SK-N-SH (cell line): ENCODE measurements at regions of chr3 and their contacts with region 1.

Region 1: DNA sequence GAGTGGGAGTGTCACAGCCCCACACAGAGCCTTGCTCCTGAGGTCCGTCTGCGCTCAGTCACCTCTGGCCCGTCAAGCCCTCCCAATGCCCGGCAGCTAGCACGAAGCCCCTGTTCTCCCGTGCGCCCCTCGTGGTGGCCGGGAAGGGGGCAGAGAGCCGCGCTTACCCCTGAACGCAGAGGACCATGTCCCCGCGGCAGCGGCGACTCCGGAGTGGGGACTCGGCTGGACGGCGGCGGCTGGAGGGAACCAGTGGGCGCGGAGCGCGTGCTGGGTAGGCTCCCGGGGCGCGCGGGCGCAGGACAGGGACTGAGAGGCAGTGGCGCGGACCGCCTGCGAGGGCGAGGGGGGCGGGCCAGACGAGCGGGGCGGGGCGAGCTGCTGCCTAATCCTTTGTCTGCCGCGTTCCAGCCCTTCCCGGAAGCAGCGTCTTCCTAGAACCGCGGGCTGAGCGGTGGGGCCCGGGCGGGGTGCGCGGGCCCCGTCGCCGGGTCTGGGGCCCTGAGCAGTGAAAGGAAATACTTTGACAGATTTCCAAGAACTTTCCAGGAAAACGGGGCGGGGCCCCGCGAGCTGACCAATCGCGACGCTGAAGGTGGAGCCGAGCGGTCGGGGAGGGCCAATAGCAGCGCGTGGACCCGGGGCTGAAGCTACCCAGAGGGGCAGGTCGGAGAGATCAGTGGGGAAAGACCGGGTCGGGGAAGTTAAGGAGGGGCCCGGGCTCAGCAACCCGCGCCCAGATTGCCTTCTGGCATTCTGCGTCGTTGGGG is at the start of gene CISH:
- DNase-seq: peak; percentile 96
- H3K4me3 ChIP-seq: peak within 1 kb of the TSS; percentile 56 to 71
- H3K27ac ChIP-seq: peak within 1 kb of the TSS; percentile 14 to 73; a peak in 3 of 4 replicates
- H3K4me1 ChIP-seq: peaks cover 0 to 44% of the 10 kb centered on the region in 2 experiments; a peak in 1 of 4 replicates
- H3K27me3 ChIP-seq: no peaks in the 10 kb centered on the region
- CTCF ChIP-seq: peak; percentile 58
- EP300 ChIP-seq: no peak
- RAD21 ChIP-seq: no peak
- polyA plus RNA-seq, gene CISH: 2.0 and 2.6 TPM in 2 replicates

Region 2: DNA sequence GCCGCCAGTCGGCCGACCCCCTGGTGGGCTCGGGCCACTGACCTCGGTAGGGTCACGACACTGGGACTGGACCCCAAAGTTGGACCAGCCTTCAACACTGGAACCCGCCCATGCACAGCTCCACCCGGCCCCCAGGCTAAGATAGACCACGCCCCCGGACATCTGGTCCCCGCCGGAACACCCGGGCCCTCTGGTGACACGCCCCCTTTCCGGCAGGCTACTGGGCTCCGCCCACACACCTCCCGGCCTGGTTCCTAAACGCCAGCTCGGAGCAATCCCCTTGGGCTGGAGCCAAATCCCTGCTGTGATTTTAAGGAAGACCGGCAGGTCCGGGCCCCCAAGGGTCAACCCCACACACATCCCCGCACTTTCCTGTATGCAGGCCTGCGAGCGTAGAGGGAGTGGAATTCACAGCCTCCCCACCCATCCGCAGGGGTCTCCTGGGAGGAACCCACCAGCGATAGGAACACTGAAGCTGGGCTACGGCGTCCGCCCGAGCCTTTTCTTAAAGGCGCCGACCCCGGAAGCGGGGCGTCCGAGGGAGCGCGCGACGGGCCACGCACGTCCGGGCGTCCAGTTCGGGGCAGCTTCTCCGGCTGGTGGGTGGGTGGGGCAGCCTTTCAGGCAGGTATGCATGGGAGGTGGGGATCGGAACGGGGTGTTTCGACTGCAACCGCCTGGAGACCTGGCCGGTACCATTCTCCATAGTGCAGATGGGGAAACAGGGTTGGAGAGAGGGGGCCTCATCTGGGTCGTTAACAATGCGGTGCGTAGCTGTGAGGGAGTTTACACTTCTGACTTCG is 42.5 kb before region 1 on chr3 and contains the start of gene HEMK1:
- CTCF ChIA-PET with region 1: interaction called, 648 read pairs
- POLR2A ChIA-PET with region 1: interaction called, 8 read pairs
- DNase-seq: peak; percentile 99
- H3K4me3 ChIP-seq: peak within 1 kb of the TSS; percentile 71 to 81
- H3K27ac ChIP-seq: peak within 1 kb of the TSS; percentile 86 to 96
- H3K4me1 ChIP-seq: peaks cover 0 to 22% of the 10 kb centered on the region in 2 experiments; a peak in 1 of 4 replicates
- H3K27me3 ChIP-seq: no peaks in the 10 kb centered on the region
- CTCF ChIP-seq: no peak
- EP300 ChIP-seq: peak in 1 of 2 experiments; percentile 48; a peak in 1 of 4 replicates
- RAD21 ChIP-seq: no peak
- polyA plus RNA-seq, gene HEMK1: 15.4 and 21.7 TPM in 2 replicates

Region 3: GRCh38 chr3:50627407-50628051 is 15.9 kb after region 1 on chr3:
- CTCF ChIA-PET with region 1: interaction called, 162 read pairs
- POLR2A ChIA-PET with region 1: interaction called, 3 read pairs
- DNase-seq: peak; percentile 49
- H3K4me3 ChIP-seq: no peak overlapping the region
- H3K27ac ChIP-seq: 0 out of 4 replicates have a peak overlapping the region, but pooled peaks of 1 of the 2 experiments have one; percentile 28
- H3K4me1 ChIP-seq: peaks cover 11 to 34% of the 10 kb centered on the region in 2 experiments; a peak in 3 of 4 replicates
- H3K27me3 ChIP-seq: no peaks in the 10 kb centered on the region
- CTCF ChIP-seq: peak; percentile 56
- EP300 ChIP-seq: no peak
- RAD21 ChIP-seq: peak; percentile 74

Region 4: DNA sequence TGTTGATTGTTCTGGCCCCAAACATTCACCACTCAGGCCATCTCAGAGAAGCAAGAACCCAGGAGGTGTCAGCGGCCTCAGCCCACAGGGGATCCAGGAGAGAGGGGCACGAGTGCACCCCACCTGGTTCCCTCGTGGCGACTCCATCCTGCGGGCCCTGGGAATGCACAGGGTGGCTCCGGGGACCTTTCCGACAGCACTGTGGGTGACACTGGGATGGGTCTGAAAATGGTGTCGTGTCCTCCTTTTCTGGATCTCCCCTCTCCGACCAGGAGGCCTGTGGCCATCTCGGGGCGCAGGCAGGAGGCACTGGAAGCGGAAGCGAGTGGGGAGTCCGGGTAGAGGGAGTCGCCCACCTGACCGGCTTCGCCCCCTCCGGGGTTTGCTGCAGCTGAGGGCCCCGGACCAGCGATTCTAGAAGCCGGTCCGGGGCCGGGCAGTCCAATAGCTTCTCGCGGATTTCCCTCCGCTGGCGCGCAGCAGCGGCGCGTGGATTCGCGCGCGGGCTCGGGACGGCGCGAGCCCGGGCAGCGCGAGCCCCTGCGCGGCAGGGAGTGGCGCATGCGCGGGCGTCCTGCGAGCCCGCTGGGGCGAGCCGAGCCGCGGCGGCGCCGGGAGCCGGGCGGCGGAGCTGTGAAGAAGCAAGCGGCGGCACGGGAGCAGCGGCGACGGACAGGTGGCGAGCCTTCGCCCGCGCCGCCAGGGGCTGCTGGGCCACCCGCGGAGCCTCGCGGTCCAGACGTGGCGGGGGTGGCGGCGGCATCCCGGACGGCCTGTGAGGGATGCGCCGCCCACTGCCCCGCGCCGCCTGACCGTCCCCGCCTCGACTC is 62.9 kb after region 1 on chr3 and contains the start of gene DOCK3:
- CTCF ChIA-PET with region 1: interaction called, 44 read pairs
- POLR2A ChIA-PET with region 1: no interaction called
- DNase-seq: peak; percentile 94
- H3K4me3 ChIP-seq: peak within 1 kb of the TSS; percentile 25 to 45; a peak in 3 of 4 replicates
- H3K27ac ChIP-seq: no peak within 1 kb of the TSS
- H3K4me1 ChIP-seq: peaks cover 0 to 4% of the 10 kb centered on the region in 2 experiments; a peak in 1 of 4 replicates
- H3K27me3 ChIP-seq: peaks cover 56% of the 10 kb centered on the region
- CTCF ChIP-seq: no peak
- EP300 ChIP-seq: no peak
- RAD21 ChIP-seq: no peak
- polyA plus RNA-seq, gene DOCK3: 0.05 TPM in 2 replicates

Region 5: GRCh38 chr3:51379301-51379700 is 767.7 kb after region 1 on chr3:
- CTCF ChIA-PET with region 1: interaction called, 53 read pairs
- POLR2A ChIA-PET with region 1: interaction called, 8 read pairs
- DNase-seq: no peak
- H3K4me3 ChIP-seq: no peak overlapping the region
- H3K27ac ChIP-seq: no peak overlapping the region
- H3K4me1 ChIP-seq: peaks cover 6% of the 10 kb centered on the region in 2 experiments; a peak in 3 of 4 replicates
- H3K27me3 ChIP-seq: no peaks in the 10 kb centered on the region; the same call in 1 of the 2 replicates
- CTCF ChIP-seq: no peak
- EP300 ChIP-seq: no peak
- RAD21 ChIP-seq: no peak